Natural killer cell (primary cell): ENCODE measurements at regions of chr1 and their contacts with region 1.

Region 1: DNA sequence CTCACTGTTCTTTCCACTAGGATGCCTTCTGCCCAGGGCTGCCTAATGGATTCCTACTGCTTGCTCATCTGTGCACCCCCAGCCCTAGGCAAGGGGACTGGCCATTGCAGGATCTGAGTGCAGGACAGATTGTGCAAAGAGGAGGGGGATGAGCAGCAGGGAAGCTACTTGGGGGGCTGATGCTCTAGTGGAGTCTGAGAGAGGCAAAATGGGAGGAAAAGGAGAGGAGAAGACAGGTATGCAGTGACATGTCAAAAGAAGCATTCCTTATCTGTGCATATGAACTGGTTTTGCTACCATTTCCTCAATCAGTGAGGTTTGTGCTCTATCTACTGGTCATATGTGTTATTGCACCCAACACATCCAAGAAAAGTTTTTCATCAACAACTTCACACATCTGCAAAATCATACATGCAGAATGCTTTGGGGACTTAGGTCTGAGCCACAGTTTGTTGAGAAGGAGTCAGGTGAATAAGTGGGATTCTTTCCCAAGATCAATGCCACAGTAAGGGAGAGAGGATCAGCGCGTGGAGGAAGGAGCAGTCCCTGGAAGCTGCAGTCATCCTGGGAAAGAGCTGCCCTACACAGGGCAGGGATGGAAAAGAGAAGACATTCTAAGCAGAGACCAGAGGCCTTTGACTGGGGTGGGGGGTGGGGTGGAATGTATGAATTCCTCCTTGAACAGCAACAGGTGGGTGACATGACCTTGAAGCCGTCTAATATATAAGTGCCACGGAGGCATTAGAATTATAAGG is 14.4 kb downstream of the SLC5A9 start:
- DNase-seq: peak in 1 of 2 donors; percentile 70
- ATAC-seq: peak; percentile 65 to 86 (median 70)
- H3K4me3 ChIP-seq: no peak overlapping the region
- H3K4me3 Mint-ChIP-seq: no peak overlapping the region
- H3K27ac ChIP-seq: no peak overlapping the region
- H3K27ac Mint-ChIP-seq: no peak overlapping the region
- H3K4me1 ChIP-seq: no peaks in the 10 kb centered on the region
- H3K4me1 Mint-ChIP-seq: no peaks in the 10 kb centered on the region
- H3K27me3 ChIP-seq: no peaks in the 10 kb centered on the region
- H3K27me3 Mint-ChIP-seq: no peaks in the 10 kb centered on the region
- CTCF ChIP-seq: peak; percentile 80

Region 2: GRCh38 chr1:47997289-47998200 is 239.3 kb before region 1 on chr1 and contains the start of gene TRABD2B:
- intact Hi-C with region 1: loop called (anchors 2 kb)
- DNase-seq: peak; percentile 63 to 73
- ATAC-seq: peak; percentile 75 to 95 (median 83)
- H3K4me3 ChIP-seq: no peak within 1 kb of the TSS
- H3K4me3 Mint-ChIP-seq: peak within 1 kb of the TSS; percentile 73
- H3K27ac ChIP-seq: no peak within 1 kb of the TSS
- H3K27ac Mint-ChIP-seq: no peak within 1 kb of the TSS
- H3K4me1 ChIP-seq: peaks cover 3% of the 10 kb centered on the region
- H3K4me1 Mint-ChIP-seq: peaks cover 0 to 13% of the 10 kb centered on the region in 2 donors
- H3K27me3 ChIP-seq: peaks cover 13% of the 10 kb centered on the region
- H3K27me3 Mint-ChIP-seq: peaks cover 54 to 62% of the 10 kb centered on the region in 2 donors
- CTCF ChIP-seq: peak; percentile 90
- total RNA-seq, gene TRABD2B: not detected

Region 3: GRCh38 chr1:48093696-48094528 is 143.0 kb before region 1 on chr1:
- intact Hi-C with region 1: loop called (anchors 1 kb)
- DNase-seq: peak; percentile 62 to 82
- ATAC-seq: peak; percentile 82 to 98 (median 84)
- H3K4me3 ChIP-seq: no peak overlapping the region
- H3K4me3 Mint-ChIP-seq: peak overlapping the region; percentile 53
- H3K27ac ChIP-seq: no peak overlapping the region
- H3K27ac Mint-ChIP-seq: no peak overlapping the region
- H3K4me1 ChIP-seq: peaks cover 8% of the 10 kb centered on the region
- H3K4me1 Mint-ChIP-seq: peaks cover 10 to 11% of the 10 kb centered on the region in 2 donors
- H3K27me3 ChIP-seq: peaks cover 6% of the 10 kb centered on the region
- H3K27me3 Mint-ChIP-seq: peaks cover 28 to 75% of the 10 kb centered on the region in 2 donors
- CTCF ChIP-seq: peak; percentile 86

Region 4: GRCh38 chr1:48109390-48110013 is 127.4 kb before region 1 on chr1:
- intact Hi-C with region 1: loop called (anchors 1 kb)
- DNase-seq: peak in 1 of 2 donors; percentile 55
- ATAC-seq: no peak
- H3K4me3 ChIP-seq: no peak overlapping the region
- H3K4me3 Mint-ChIP-seq: no peak overlapping the region
- H3K27ac ChIP-seq: no peak overlapping the region
- H3K27ac Mint-ChIP-seq: no peak overlapping the region
- H3K4me1 ChIP-seq: no peaks in the 10 kb centered on the region
- H3K4me1 Mint-ChIP-seq: no peaks in the 10 kb centered on the region
- H3K27me3 ChIP-seq: peaks cover 2% of the 10 kb centered on the region
- H3K27me3 Mint-ChIP-seq: peaks cover 5 to 21% of the 10 kb centered on the region in 2 donors
- CTCF ChIP-seq: peak; percentile 69